WTC11 (cell line): ENCODE measurements at regions of chr12 and their contacts with region 1.

Region 1: DNA sequence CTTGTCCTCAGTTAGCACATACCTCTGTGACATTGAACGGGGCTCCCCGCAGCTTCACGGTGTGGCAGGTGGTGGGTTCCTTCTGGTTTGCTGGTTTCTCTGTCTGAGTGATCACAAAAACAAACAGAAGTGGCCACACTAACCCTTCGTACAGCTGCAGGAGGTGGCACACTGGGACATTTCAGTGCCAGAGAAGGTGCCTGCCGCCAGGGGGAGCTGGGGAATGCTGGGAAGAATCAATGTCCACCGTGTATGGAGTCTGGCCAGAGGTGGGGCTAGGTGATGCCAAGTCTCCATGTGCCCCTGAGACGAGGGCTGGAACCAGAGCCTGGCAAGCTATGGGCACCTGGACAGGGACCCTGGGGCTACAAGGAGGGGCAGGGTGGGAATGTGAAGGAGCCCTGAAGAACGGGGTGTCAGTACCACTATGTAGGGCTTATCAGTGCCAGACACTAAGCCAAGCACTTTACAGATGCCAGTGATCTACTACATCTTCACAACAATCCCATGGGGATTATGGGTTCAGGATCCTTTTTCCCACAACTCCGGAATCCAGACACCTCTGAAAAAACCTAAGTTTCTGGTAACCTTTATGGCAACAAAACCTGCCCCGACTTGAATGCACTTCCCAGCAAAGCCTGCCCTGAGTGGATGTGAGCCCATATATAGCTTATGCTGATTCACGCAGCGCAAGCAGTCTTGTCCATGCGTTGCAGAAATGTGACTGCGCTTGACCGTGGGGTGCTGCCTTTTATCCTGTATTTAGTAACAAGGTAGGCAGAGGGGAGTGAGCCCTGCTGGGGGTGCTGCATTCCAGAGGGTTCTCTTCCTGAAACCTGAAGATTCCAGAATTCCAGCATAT is 10.8 kb downstream of the RBM19 start:
- DNase-seq: peak; percentile 72
- ATAC-seq: peak; percentile 94
- H3K4me3 Mint-ChIP-seq: no peak overlapping the region
- H3K27ac Mint-ChIP-seq: no peak overlapping the region
- H3K4me1 Mint-ChIP-seq: no peaks in the 10 kb centered on the region
- H3K27me3 Mint-ChIP-seq: no peaks in the 10 kb centered on the region
- CTCF ChIP-seq: peak; percentile 54; the same call in 1 of the 2 replicates

Region 2: GRCh38 chr12:113889076-113889475 is 66.3 kb before region 1 on chr12:
- CTCF ChIA-PET with region 1: no interaction called
- POLR2A ChIA-PET with region 1: no interaction called
- DNase-seq: no peak
- ATAC-seq: peak; percentile 24; the same call in 1 of the 2 replicates
- H3K4me3 Mint-ChIP-seq: no peak overlapping the region
- H3K27ac Mint-ChIP-seq: no peak overlapping the region
- H3K4me1 Mint-ChIP-seq: peaks cover 16% of the 10 kb centered on the region
- H3K27me3 Mint-ChIP-seq: no peaks in the 10 kb centered on the region
- CTCF ChIP-seq: no peak

Region 3: DNA sequence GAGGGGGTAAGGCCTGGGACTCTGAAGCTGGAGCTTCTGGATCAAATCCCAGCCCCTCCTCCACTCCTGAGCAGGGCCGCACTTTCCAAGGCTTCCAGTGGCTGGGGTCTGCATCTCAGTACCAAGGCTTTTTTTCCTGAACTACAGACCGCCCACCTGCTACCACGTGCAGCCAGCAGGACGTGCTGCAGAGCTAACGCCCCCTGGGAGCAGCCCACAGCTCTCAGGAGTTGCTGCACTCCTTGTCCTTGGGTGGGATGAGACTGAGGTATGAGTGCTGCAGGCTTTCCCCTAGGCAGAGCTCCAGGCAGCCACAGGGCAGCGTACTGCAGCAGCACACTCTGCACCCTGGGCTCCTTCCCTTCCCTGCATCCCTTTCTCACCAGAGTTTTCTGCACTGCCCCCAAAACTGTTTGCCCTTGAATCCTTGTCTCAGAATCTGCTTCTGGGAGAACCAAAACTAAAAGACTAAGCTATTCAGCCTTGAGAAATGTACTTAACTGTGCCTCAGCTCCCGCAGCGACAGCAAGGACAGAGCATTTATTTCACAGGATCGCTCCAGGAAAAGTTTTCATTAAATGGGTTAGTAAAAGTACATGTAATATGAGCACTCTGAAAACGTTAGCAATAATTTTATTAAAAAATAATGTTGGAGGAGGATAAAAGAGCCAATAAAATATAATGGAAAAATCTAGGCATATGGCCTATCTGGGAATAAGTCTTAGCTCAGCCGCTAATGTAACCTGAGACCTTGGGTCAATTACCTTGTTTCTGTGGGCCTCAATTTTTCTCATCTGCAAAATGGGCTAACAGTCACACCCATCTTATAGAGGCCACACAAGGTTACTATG is 14.8 kb before region 1 on chr12:
- CTCF ChIA-PET with region 1: interaction called, 11 read pairs
- POLR2A ChIA-PET with region 1: no interaction called
- DNase-seq: peak; percentile 34
- ATAC-seq: peak; percentile 91
- H3K4me3 Mint-ChIP-seq: no peak overlapping the region
- H3K27ac Mint-ChIP-seq: no peak overlapping the region
- H3K4me1 Mint-ChIP-seq: no peaks in the 10 kb centered on the region
- H3K27me3 Mint-ChIP-seq: no peaks in the 10 kb centered on the region
- CTCF ChIP-seq: no peak

Region 4: GRCh38 chr12:113973109-113973904 is 18.0 kb after region 1 on chr12:
- CTCF ChIA-PET with region 1: no interaction called
- POLR2A ChIA-PET with region 1: no interaction called
- DNase-seq: no peak
- ATAC-seq: no peak
- H3K4me3 Mint-ChIP-seq: no peak overlapping the region
- H3K27ac Mint-ChIP-seq: no peak overlapping the region
- H3K4me1 Mint-ChIP-seq: peaks cover 5% of the 10 kb centered on the region; the same call in 1 of the 2 replicates
- H3K27me3 Mint-ChIP-seq: peaks cover 41% of the 10 kb centered on the region
- CTCF ChIP-seq: no peak

Region 5: GRCh38 chr12:114013575-114014345 is 58.4 kb after region 1 on chr12:
- CTCF ChIA-PET with region 1: no interaction called
- POLR2A ChIA-PET with region 1: no interaction called
- DNase-seq: peak; percentile 52
- ATAC-seq: peak; percentile 80
- H3K4me3 Mint-ChIP-seq: no peak overlapping the region
- H3K27ac Mint-ChIP-seq: no peak overlapping the region
- H3K4me1 Mint-ChIP-seq: 0 out of 2 replicates have a peak, but pooled peaks cover 3% of the 10 kb centered on the region
- H3K27me3 Mint-ChIP-seq: peaks cover 8% of the 10 kb centered on the region
- CTCF ChIP-seq: no peak